Endothelial cell of umbilical vein (primary cell): ENCODE measurements at regions of chr10 and their contacts with region 1.

Region 1: GRCh38 chr10:94439275-94439861 is 37.0 kb downstream of the TBC1D12 start:
- DNase-seq: peak; percentile 32
- H3K4me3 ChIP-seq: no peak overlapping the region
- H3K27ac ChIP-seq: no peak overlapping the region
- H3K4me1 ChIP-seq: no peaks in the 10 kb centered on the region
- H3K27me3 ChIP-seq: no peaks in the 10 kb centered on the region
- CTCF ChIP-seq: no peak
- POLR2A ChIP-seq: no peak

Region 2: GRCh38 chr10:93386631-93387369 is 1052.6 kb before region 1 on chr10:
- CTCF ChIA-PET with region 1: no interaction called
- POLR2A ChIA-PET with region 1: no interaction called
- dilution Hi-C with region 1: no loop called
- intact Hi-C with region 1: no loop called
- DNase-seq: no peak
- H3K4me3 ChIP-seq: no peak overlapping the region
- H3K27ac ChIP-seq: no peak overlapping the region
- H3K4me1 ChIP-seq: peaks cover 17% of the 10 kb centered on the region
- H3K27me3 ChIP-seq: no peaks in the 10 kb centered on the region
- CTCF ChIP-seq: no peak
- POLR2A ChIP-seq: no peak

Region 3: DNA sequence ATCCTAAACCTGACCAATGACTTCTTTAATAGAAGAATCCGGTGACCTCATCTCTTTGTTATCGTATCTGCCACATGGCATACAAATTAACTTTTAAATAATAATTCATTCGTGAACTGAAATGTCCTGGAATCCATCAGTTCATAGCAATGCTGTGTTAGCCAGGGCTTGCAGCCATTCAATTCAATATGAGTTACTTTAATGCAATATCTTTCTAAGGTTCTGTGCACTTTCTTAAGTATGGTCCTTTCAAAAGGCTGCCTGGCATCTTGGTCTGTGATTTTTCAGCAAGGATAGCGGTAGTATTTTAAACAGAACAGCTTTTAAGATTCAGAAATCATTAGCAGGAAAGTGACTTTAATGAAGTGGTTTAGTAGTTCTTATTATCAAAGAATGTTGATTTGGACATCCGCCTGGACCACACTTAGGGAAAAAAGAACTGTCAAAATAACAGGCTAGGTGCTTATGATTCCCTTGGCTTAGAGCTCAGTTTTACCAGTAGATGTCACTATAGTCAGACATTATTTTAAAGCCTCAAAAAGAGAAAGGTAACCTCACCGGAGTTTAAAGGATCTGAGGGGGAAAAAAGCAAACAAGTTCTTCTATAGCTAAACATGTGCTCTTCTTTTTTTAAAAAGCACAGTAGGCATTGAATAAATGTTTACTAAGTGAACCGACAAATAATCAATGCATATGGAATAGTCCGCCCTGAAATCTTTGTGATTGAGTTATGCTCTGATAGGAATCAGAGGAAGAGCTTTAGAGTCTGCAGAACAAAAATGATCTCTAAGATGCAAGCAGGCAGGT is 522.9 kb before region 1 on chr10:
- CTCF ChIA-PET with region 1: interaction called, 45 read pairs
- POLR2A ChIA-PET with region 1: no interaction called
- dilution Hi-C with region 1: no loop called
- intact Hi-C with region 1: loop called (anchors 5 kb)
- DNase-seq: peak; percentile 31
- H3K4me3 ChIP-seq: no peak overlapping the region
- H3K27ac ChIP-seq: no peak overlapping the region
- H3K4me1 ChIP-seq: peaks cover 7% of the 10 kb centered on the region
- H3K27me3 ChIP-seq: no peaks in the 10 kb centered on the region
- CTCF ChIP-seq: peak in 1 of 2 donors; percentile 33
- POLR2A ChIP-seq: no peak

Region 4: GRCh38 chr10:94308866-94309265 is 130.5 kb before region 1 on chr10:
- CTCF ChIA-PET with region 1: interaction called, 10 read pairs
- POLR2A ChIA-PET with region 1: no interaction called
- dilution Hi-C with region 1: no loop called
- intact Hi-C with region 1: no loop called
- DNase-seq: peak; percentile 87
- H3K4me3 ChIP-seq: no peak overlapping the region
- H3K27ac ChIP-seq: no peak overlapping the region
- H3K4me1 ChIP-seq: peaks cover 12% of the 10 kb centered on the region
- H3K27me3 ChIP-seq: peaks cover 0 to 2% of the 10 kb centered on the region in 2 experiments
- CTCF ChIP-seq: no peak
- POLR2A ChIP-seq: no peak

Region 5: DNA sequence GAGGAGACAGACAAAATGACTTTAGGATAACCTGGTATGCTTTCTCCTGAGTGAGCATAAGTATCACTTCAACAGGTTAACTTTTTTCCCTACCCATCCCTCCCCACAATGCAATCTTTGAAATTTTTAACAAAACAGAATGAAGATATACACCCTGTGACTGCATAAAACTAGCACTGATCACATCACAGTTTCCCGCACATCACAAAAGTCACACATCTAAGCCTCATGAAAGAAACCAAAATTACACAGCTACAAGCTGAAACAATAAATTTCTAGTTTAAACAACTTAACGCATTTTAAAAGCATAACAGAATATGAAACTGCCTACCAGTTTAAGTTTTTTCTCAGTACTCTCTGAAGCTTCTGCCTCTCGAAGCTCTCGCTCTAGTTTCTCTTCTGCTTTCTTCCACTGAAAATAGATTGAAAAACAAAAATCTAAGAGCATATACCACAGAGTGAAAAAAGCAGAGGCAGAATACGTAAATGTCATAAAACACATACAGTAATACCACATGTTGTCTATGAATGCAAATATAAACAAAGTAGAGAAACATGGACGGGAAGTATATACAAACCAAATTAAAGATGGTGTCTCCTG is 94.7 kb before region 1 on chr10:
- CTCF ChIA-PET with region 1: interaction called, 22 read pairs
- POLR2A ChIA-PET with region 1: no interaction called
- dilution Hi-C with region 1: no loop called
- intact Hi-C with region 1: no loop called
- DNase-seq: no peak
- H3K4me3 ChIP-seq: no peak overlapping the region
- H3K27ac ChIP-seq: no peak overlapping the region
- H3K4me1 ChIP-seq: no peaks in the 10 kb centered on the region
- H3K27me3 ChIP-seq: no peaks in the 10 kb centered on the region
- CTCF ChIP-seq: no peak
- POLR2A ChIP-seq: no peak

Region 6: GRCh38 chr10:94383530-94383929 is 55.8 kb before region 1 on chr10:
- CTCF ChIA-PET with region 1: interaction called, 15 read pairs
- POLR2A ChIA-PET with region 1: no interaction called
- dilution Hi-C with region 1: no loop called
- intact Hi-C with region 1: no loop called
- DNase-seq: no peak
- H3K4me3 ChIP-seq: no peak overlapping the region
- H3K27ac ChIP-seq: no peak overlapping the region
- H3K4me1 ChIP-seq: no peaks in the 10 kb centered on the region
- H3K27me3 ChIP-seq: no peaks in the 10 kb centered on the region
- CTCF ChIP-seq: no peak
- POLR2A ChIP-seq: no peak

Region 7: DNA sequence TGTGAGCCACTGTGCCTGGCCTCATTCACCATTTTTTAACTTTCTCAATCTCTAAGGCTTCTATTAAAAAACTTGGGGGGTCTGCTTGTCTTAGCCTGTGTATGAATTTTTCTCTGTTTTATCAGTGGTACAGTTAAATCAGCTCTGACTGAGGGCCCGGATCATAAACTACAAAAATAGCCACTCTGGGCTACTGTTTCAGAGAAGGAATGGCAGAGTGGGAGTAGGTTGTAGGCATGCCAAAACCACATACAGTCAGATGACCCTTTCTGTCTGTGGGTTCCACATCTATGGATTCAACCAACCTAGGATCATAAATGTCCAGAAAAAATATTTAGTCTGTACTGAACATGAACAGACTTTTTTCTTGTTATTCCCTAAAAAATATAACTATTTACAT is 15.7 kb before region 1 on chr10:
- CTCF ChIA-PET with region 1: interaction called, 18 read pairs
- POLR2A ChIA-PET with region 1: no interaction called
- dilution Hi-C with region 1: no loop called
- intact Hi-C with region 1: no loop called
- DNase-seq: no peak
- H3K4me3 ChIP-seq: no peak overlapping the region
- H3K27ac ChIP-seq: no peak overlapping the region
- H3K4me1 ChIP-seq: no peaks in the 10 kb centered on the region
- H3K27me3 ChIP-seq: no peaks in the 10 kb centered on the region
- CTCF ChIP-seq: no peak
- POLR2A ChIP-seq: no peak

Region 8: DNA sequence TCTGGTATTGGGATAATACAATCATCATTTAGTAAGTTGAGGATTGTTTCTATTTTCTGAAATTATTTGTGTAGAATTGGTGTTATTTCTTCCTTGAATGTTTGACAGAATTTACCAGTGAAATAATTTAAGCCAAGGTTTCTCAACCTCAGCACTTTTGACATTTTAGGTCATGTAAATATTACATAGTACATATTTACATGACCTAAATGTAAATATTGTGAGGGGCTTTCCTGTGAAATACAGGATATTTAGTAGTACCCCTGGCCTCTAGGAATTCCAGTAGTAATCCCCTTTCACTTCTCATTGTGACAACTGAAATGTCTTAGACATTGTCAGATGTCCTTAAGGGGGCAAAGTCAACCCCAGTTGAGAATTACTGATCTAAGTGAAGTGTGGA is 22.8 kb after region 1 on chr10:
- CTCF ChIA-PET with region 1: interaction called, 40 read pairs
- POLR2A ChIA-PET with region 1: no interaction called
- dilution Hi-C with region 1: no loop called
- intact Hi-C with region 1: no loop called
- DNase-seq: no peak
- H3K4me3 ChIP-seq: no peak overlapping the region
- H3K27ac ChIP-seq: no peak overlapping the region
- H3K4me1 ChIP-seq: no peaks in the 10 kb centered on the region
- H3K27me3 ChIP-seq: no peaks in the 10 kb centered on the region
- CTCF ChIP-seq: no peak
- POLR2A ChIP-seq: no peak